Activated CD4-positive, alpha-beta memory T cell treated with anti-CD3 and anti-CD28 coated beads for 36 hours (primary cell): ENCODE measurements at regions of chr3 and their contacts with region 1.

Region 1: DNA sequence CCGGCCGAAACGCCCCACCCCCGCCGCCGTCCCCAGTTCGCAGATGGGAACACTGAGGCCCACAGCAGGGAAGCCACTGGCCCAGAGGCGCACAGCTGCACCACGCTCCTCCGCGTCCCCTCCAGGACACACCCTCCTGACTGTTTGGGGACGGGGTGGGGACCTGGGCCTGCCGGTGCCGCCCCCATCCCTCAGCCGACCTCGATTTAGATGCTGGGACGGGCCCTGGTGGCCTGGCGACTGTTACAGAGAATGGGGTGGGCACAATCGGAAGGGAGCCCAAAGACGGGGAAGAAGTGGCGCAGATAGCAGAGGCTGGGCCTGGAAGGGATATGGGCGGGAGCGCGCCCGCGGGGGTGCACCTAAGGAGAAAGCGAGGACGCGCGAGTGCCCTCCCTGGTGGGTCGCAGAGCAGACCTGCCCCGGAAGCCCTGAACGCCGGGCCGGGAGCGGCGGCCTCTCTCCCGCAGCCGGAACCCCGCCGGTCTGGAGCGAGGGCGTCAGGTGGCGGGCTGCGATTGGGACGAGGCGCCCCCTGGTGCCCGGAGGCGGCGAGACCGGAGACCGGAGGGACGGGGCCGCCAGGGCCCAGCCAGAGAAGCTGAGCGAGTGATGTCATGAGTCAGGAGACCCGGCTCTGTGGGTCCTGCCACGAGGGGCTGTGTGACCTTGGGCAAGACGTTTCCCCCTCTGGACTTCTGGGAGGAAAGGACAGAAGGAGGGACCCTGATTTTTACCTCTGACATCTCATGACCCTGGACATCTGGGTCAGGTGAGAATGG is 78.4 kb downstream of the IQSEC1 start:
- DNase-seq: peak; percentile 92
- H3K4me3 Mint-ChIP-seq: peak overlapping the region; percentile 85
- H3K27ac Mint-ChIP-seq: peak overlapping the region; percentile 71
- H3K4me1 Mint-ChIP-seq: peaks cover 54% of the 10 kb centered on the region
- H3K27me3 Mint-ChIP-seq: no peaks in the 10 kb centered on the region

Region 2: DNA sequence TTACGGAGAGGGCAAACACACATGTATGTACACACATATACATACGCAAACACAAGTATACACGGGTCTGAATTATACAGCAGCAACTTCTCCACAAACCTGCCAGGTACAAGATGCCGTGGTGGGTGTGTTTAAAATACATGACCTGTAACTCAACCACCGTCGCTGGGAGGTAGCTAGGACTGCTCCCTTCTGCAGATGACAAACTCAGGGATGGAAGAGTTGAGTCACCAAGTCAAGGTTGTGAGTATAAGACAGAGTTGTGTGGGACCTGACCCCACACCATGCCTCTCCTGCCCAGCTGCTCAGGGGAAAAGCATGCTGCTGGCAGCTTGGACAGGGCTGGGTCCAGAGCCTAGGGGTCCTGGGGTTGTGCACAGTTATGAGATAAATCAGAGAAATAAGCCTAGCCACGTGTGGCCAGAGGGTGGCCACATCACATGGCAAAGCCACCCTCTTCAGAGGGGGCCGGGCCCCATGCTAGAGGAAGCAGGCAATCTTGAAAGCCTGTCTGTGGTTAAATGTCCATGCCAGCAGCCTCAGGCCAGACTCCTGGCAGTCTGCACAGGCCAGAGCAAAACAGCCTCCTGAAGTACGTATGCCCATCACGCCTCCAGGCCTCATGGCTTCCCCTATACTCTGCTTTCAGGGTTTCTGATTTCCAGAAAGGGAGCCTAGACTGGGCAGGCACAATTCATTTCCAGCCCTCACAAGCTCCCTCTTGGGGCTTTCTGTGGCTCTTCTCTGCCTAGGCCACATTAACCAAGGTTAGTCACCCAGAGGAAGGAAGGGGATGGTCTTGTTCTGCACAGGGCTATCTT is 45.7 kb before region 1 on chr3:
- CTCF ChIA-PET with region 1: interaction called, 15 read pairs
- POLR2A ChIA-PET with region 1: interaction called, 3 read pairs
- intact Hi-C with region 1: loop called (anchors 1 kb)
- DNase-seq: peak; percentile 70
- H3K4me3 Mint-ChIP-seq: peak overlapping the region; percentile 27
- H3K27ac Mint-ChIP-seq: peak overlapping the region; percentile 83
- H3K4me1 Mint-ChIP-seq: peaks cover 54% of the 10 kb centered on the region
- H3K27me3 Mint-ChIP-seq: no peaks in the 10 kb centered on the region

Region 3: GRCh38 chr3:12967606-12968351 is 27.0 kb before region 1 on chr3:
- CTCF ChIA-PET with region 1: interaction called, 9 read pairs
- POLR2A ChIA-PET with region 1: interaction called, 3 read pairs
- intact Hi-C with region 1: loop called (anchors 5 kb)
- DNase-seq: peak; percentile 93
- H3K4me3 Mint-ChIP-seq: peak overlapping the region; percentile 71
- H3K27ac Mint-ChIP-seq: peak overlapping the region; percentile 67
- H3K4me1 Mint-ChIP-seq: peaks cover 58% of the 10 kb centered on the region
- H3K27me3 Mint-ChIP-seq: no peaks in the 10 kb centered on the region

Region 4: GRCh38 chr3:13012228-13012691 is 17.5 kb after region 1 on chr3:
- CTCF ChIA-PET with region 1: interaction called, 71 read pairs
- POLR2A ChIA-PET with region 1: interaction called, 6 read pairs
- intact Hi-C with region 1: loop called (anchors 1 kb)
- DNase-seq: peak; percentile 83
- H3K4me3 Mint-ChIP-seq: peak overlapping the region; percentile 70
- H3K27ac Mint-ChIP-seq: peak overlapping the region; percentile 93
- H3K4me1 Mint-ChIP-seq: peaks cover 80% of the 10 kb centered on the region
- H3K27me3 Mint-ChIP-seq: no peaks in the 10 kb centered on the region